ENCODE measurements at regions of chr1 and their contacts with region 1.

Region 1: GRCh38 chr1:151881456-151881855 is 27.9 kb downstream of the THEM4 start:
- DNase-seq: no peak
- ATAC-seq: no peak
- H3K4me3 ChIP-seq: no peak overlapping the region
- H3K4me3 Mint-ChIP-seq: no peak overlapping the region
- H3K27ac ChIP-seq: no peak overlapping the region
- H3K27ac Mint-ChIP-seq: peak overlapping the region in 1 of 9 donors; percentile 80
- H3K4me1 ChIP-seq: no peaks in the 10 kb centered on the region
- H3K4me1 Mint-ChIP-seq: peaks cover 0 to 15% (median 4%) of the 10 kb centered on the region in 7 donors
- H3K27me3 ChIP-seq: no peaks in the 10 kb centered on the region
- H3K27me3 Mint-ChIP-seq: no peaks in the 10 kb centered on the region

Region 2: DNA sequence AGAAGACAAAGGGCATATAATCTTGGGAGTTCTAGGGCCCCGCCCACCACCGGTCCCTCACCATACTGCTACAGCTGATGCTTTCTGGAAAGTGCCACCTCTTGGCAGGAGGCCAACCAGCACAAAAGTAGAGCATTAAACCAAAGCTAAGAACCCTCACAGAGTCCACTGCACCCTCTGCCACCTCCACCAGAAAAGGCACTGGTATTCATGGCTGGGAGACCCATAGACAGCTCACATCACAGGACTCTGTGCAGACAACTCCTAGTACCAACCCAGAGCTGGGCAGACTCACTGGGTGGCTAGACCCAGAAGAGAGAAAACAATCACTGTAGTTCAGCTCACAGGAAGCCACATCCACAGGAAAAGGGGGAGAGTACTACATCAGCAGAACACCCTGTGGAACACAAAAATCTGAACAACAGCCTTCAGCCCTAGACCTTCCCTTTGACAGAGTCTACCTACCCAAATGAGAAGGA is 17.1 kb after region 1 on chr1:
- CTCF ChIA-PET with region 1: interaction called, 5 read pairs
- POLR2A ChIA-PET with region 1: interaction called, 10 read pairs
- intact Hi-C with region 1: no loop called
- DNase-seq: peak; percentile 16 to 88 (median 83)
- ATAC-seq: peak; percentile 89
- H3K4me3 ChIP-seq: peak overlapping the region; percentile 61
- H3K4me3 Mint-ChIP-seq: peak overlapping the region; percentile 76 to 91 (median 84)
- H3K27ac ChIP-seq: peak overlapping the region; percentile 66
- H3K27ac Mint-ChIP-seq: peak overlapping the region; percentile 85 to 100 (median 97)
- H3K4me1 ChIP-seq: peaks cover 29 to 52% of the 10 kb centered on the region in 2 donors
- H3K4me1 Mint-ChIP-seq: peaks cover 53 to 91% (median 69%) of the 10 kb centered on the region in 7 donors
- H3K27me3 ChIP-seq: no peaks in the 10 kb centered on the region
- H3K27me3 Mint-ChIP-seq: no peaks in the 10 kb centered on the region

Measured in naive thymus-derived CD4-positive, alpha-beta T cell (primary cell).